Activated T-helper 1 cell treated with anti-CD3 and anti-CD28 coated beads, Interleukin-12 subunit alpha, Interleukin-12 subunit beta, Interleukin-2, Interleukin-4 antibody, amounts not matched to agents 30 ng/mL and 10 ng/mL and 1 ng/mL, durations not matched to agents 14 hours and 24 hours and 36 hours (primary cell): ENCODE measurements at regions of chr5 and their contacts with region 1.

Region 1: DNA sequence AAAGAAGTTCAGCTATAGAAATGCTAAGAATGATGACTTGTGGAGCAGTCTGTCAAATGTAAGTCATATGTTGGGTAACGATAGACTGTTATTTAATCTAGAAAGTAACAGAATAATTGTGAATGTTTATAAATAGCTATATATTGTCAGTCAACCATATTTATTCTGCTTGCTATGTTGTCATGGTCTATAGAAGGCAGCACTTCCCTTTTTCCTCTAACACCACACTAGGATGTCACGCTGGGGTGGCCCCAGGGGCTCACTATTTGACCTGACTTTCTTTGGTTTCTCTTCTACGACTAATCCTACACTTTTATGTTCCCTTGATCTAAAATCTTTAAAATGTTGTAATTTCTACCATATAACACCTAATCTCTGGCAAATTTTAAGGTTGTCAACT is 20.5 kb downstream of the ERAP2 start:
- DNase-seq: no peak
- H3K4me3 Mint-ChIP-seq: peak overlapping the region; percentile 84
- H3K27ac Mint-ChIP-seq: peak overlapping the region; percentile 96
- H3K4me1 Mint-ChIP-seq: peaks cover 62% of the 10 kb centered on the region
- H3K27me3 Mint-ChIP-seq: no peaks in the 10 kb centered on the region

Region 2: GRCh38 chr5:96752341-96753016 is 144.3 kb before region 1 on chr5:
- intact Hi-C with region 1: loop called (anchors 5 kb)
- DNase-seq: no peak
- H3K4me3 Mint-ChIP-seq: no peak overlapping the region
- H3K27ac Mint-ChIP-seq: no peak overlapping the region
- H3K4me1 Mint-ChIP-seq: peaks cover 5% of the 10 kb centered on the region
- H3K27me3 Mint-ChIP-seq: no peaks in the 10 kb centered on the region

Region 3: GRCh38 chr5:96807075-96807654 is 89.6 kb before region 1 on chr5:
- intact Hi-C with region 1: loop called (anchors 1 kb)
- DNase-seq: no peak
- H3K4me3 Mint-ChIP-seq: peak overlapping the region; percentile 99
- H3K27ac Mint-ChIP-seq: peak overlapping the region; percentile 95
- H3K4me1 Mint-ChIP-seq: peaks cover 81% of the 10 kb centered on the region
- H3K27me3 Mint-ChIP-seq: no peaks in the 10 kb centered on the region

Region 4: GRCh38 chr5:96876292-96876850 is 20.4 kb before region 1 on chr5 and contains the start of gene ERAP2:
- intact Hi-C with region 1: loop called (anchors 1 kb)
- DNase-seq: no peak
- H3K4me3 Mint-ChIP-seq: peak within 1 kb of the TSS; percentile 93
- H3K27ac Mint-ChIP-seq: peak within 1 kb of the TSS; percentile 99
- H3K4me1 Mint-ChIP-seq: peaks cover 66% of the 10 kb centered on the region
- H3K27me3 Mint-ChIP-seq: no peaks in the 10 kb centered on the region
- total RNA-seq, gene ERAP2: 52.9 and 54.4 TPM in 2 replicates

Region 5: DNA sequence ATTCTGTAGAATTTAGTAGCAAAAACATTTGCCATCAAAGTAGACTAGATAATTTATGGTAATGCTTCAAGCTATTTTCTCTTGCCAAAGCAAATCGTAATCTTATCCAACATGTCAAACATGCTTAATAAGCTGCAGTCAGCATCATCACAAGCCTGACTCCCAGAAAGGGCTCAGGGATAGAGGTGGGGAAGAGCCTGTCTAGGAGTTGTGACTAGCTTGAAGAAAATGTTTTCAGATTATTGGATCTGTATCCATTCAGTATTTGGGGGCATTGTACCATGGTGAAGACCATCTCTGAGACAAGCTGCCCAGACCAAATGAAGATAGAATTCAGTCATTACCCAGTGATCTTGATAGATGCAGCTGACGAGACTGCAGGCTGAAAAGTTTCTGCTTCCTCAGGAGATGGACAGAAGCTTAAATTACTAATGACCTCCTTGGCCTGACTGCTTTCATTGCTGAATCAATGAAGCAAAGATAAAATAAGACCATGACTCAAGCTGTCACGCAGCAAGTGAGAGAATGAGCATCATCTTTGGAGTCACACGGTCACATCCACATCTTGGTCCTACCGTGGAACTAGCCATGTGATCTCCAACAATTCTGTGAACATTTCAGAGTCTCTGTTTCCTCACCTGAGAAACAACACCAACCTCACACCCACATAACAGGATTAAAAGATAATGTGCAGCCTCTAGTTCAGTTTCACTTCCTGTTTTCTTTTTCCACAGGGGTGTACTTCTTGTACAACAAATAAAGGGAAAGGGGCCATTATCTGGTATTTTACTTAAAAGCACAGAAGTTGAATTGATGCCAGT is 11.1 kb before region 1 on chr5:
- intact Hi-C with region 1: loop called (anchors 1 kb)
- DNase-seq: peak; percentile 52
- H3K4me3 Mint-ChIP-seq: peak overlapping the region; percentile 73
- H3K27ac Mint-ChIP-seq: peak overlapping the region; percentile 86
- H3K4me1 Mint-ChIP-seq: peaks cover 77% of the 10 kb centered on the region
- H3K27me3 Mint-ChIP-seq: no peaks in the 10 kb centered on the region

Region 6: GRCh38 chr5:96909003-96909402 is 12.2 kb after region 1 on chr5:
- intact Hi-C with region 1: no loop called
- DNase-seq: no peak
- H3K4me3 Mint-ChIP-seq: no peak overlapping the region
- H3K27ac Mint-ChIP-seq: no peak overlapping the region
- H3K4me1 Mint-ChIP-seq: peaks cover 9% of the 10 kb centered on the region
- H3K27me3 Mint-ChIP-seq: no peaks in the 10 kb centered on the region

Region 7: DNA sequence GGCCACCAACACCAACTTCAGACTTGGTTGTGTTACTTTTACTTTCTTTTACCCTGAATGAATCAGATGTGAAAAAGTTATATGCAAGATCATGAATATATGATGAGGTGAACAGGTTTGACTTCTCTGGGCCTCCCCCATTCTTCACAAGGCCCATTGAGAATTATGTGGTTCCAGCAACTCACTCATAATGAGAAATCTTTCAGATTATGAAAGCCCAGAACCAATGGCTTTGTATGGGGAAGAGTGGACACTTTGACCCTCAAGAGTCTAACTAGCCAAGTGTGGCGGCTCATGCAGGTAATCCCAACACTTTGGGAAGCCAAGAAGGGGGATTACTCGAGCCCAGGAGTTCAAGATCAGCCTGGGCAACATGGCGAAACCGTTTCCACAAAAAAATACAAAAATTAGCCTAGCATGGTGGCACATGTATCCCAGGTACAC is 23.0 kb after region 1 on chr5:
- intact Hi-C with region 1: loop called (anchors 1 kb)
- DNase-seq: no peak
- H3K4me3 Mint-ChIP-seq: no peak overlapping the region
- H3K27ac Mint-ChIP-seq: no peak overlapping the region
- H3K4me1 Mint-ChIP-seq: peaks cover 41% of the 10 kb centered on the region
- H3K27me3 Mint-ChIP-seq: no peaks in the 10 kb centered on the region

Region 8: GRCh38 chr5:96963267-96963666 is 66.5 kb after region 1 on chr5:
- intact Hi-C with region 1: loop called (anchors 1 kb)
- DNase-seq: peak; percentile 16
- H3K4me3 Mint-ChIP-seq: peak overlapping the region; percentile 77
- H3K27ac Mint-ChIP-seq: peak overlapping the region; percentile 80
- H3K4me1 Mint-ChIP-seq: peaks cover 70% of the 10 kb centered on the region
- H3K27me3 Mint-ChIP-seq: no peaks in the 10 kb centered on the region